ENCODE measurements at regions of chr7 and their contacts with region 1.

Region 1: GRCh38 chr7:64183126-64183742 is 23.8 kb upstream of the ZNF735 start:
- DNase-seq: peak; percentile 63
- ATAC-seq: no peak
- H3K4me3 Mint-ChIP-seq: no peak overlapping the region
- H3K27ac Mint-ChIP-seq: no peak overlapping the region
- H3K4me1 Mint-ChIP-seq: no peaks in the 10 kb centered on the region
- H3K27me3 Mint-ChIP-seq: peaks cover 12% of the 10 kb centered on the region

Region 2: GRCh38 chr7:63092951-63093350 is 1090.3 kb before region 1 on chr7:
- CTCF ChIA-PET with region 1: no interaction called
- POLR2A ChIA-PET with region 1: no interaction called
- intact Hi-C with region 1: no loop called
- DNase-seq: no peak
- ATAC-seq: no peak
- H3K4me3 Mint-ChIP-seq: no peak overlapping the region
- H3K27ac Mint-ChIP-seq: no peak overlapping the region
- H3K4me1 Mint-ChIP-seq: no peaks in the 10 kb centered on the region
- H3K27me3 Mint-ChIP-seq: no peaks in the 10 kb centered on the region

Region 3: DNA sequence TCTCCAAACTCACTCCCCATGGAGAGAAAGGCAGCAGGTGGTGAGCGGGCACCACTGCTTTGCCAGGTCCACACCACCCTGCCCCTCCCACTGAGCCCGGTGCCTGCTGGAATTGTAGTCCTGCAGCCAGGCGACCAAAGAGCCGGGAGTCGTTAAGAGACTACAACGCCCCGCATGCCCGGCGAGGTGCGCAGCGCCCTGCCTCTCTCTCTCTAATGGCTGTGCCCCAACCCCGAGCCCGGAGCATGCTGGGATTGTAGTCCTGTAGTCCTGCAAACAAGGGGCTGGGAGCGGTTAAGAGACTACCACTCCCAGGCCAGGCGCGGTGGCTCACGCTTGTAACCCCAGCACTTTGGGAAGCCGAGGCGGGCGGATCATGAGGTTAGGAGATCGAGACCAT is 146.1 kb before region 1 on chr7:
- CTCF ChIA-PET with region 1: no interaction called
- POLR2A ChIA-PET with region 1: no interaction called
- intact Hi-C with region 1: no loop called
- DNase-seq: no peak
- ATAC-seq: no peak
- H3K4me3 Mint-ChIP-seq: no peak overlapping the region
- H3K27ac Mint-ChIP-seq: no peak overlapping the region
- H3K4me1 Mint-ChIP-seq: no peaks in the 10 kb centered on the region
- H3K27me3 Mint-ChIP-seq: peaks cover 3% of the 10 kb centered on the region

Region 4: DNA sequence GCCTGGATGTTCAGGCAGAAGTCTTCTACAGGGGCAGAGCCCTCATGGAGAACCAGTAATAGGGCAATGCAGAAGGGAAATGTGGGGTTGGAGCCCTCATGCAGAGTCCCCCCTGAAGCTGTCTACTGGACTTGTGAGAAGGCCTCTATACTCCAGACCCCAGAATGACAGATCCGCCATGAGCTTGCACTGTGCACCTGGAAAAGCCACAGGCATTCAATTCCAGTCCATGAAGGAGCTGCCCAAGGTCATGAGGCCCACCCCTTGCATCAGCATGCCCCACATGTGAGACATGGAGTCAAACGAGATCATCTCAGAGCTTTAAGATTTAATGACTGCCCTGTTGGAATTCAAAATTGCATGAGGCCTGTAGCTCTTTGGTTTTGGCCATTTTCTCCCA is 40.1 kb after region 1 on chr7:
- CTCF ChIA-PET with region 1: no interaction called
- POLR2A ChIA-PET with region 1: no interaction called
- intact Hi-C with region 1: no loop called
- DNase-seq: no peak
- ATAC-seq: no peak
- H3K4me3 Mint-ChIP-seq: no peak overlapping the region
- H3K27ac Mint-ChIP-seq: no peak overlapping the region
- H3K4me1 Mint-ChIP-seq: no peaks in the 10 kb centered on the region
- H3K27me3 Mint-ChIP-seq: no peaks in the 10 kb centered on the region

Region 5: DNA sequence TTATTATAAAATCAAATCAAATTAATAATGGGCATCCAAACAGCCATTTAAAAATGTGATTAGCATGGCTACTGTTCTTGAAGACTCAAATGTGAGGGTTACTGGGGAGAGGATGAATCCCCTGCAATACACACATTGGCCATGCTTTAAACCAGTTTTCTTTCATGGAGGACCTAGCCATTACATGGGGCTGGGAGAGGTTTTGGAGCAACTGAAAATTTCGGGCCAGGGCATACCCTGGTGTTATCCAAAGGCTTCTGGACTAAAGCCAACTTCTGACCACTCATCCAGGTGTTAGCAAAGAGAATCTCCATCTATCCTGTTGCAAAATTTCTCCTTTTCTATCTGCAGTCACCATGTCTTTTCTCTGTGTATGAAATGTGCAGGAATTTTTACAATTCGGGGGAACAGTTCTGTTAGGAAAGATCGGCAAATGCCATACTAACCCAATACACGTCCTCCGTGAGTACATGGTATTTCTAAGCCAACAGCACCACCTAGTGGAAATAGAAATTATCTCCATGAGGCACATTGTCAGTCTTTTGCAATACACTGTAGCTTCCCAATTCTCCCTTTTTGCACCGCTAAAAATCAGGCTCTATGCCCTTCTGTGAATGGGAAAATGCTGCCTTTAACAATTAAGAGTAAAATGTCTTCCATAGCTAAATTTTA is 435.7 kb after region 1 on chr7:
- CTCF ChIA-PET with region 1: interaction called, 4 read pairs
- POLR2A ChIA-PET with region 1: no interaction called
- intact Hi-C with region 1: loop called (anchors 1 to 2 kb)
- DNase-seq: no peak
- ATAC-seq: no peak
- H3K4me3 Mint-ChIP-seq: no peak overlapping the region
- H3K27ac Mint-ChIP-seq: no peak overlapping the region
- H3K4me1 Mint-ChIP-seq: no peaks in the 10 kb centered on the region
- H3K27me3 Mint-ChIP-seq: no peaks in the 10 kb centered on the region

Region 6: DNA sequence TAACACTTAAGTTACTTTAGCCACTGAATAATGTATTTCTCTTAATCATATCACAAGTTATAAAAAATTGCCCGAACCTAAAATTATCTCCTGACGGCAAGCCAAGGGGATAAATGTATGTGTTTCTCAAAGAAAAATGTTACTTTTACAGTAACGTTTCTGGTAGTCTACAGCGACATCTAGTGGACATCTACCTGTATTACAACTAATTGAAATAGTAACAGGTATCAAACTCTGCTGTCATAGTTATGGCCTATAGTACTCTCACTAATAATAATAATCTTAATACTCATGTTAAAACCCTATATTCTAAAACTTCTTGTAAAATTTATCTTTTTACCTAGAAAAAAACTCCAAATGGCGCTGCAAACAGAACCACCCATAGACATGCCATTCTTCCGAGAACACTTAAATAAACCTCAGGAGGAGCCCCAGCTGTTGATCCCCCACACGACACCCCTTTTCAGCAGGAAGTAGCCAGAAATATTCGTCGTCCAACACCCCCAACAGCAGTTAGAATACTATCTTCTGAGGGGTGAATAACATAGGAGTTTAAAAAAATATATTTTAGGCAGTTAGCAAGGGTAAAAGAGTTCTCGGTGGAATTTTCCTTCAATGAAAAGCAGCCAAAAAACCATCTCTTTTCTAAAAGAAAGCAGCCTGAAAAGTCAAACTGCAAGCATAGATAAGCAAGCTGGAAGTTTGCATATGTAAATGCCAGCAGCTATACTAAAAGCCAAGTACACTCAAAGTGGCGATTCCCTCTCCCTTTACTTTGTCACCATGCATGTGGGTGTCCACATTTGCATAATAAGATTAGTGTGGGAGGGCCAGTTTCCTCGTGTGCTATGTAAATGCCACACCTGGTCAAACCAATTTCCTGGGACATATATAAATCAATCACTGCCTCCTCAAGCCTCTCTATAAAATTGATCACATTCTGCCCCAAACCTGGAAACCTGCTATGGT is 442.2 kb after region 1 on chr7:
- CTCF ChIA-PET with region 1: interaction called, 3 read pairs
- POLR2A ChIA-PET with region 1: no interaction called
- intact Hi-C with region 1: loop called in 1 of 2 experiments (anchors 1 kb)
- DNase-seq: no peak
- ATAC-seq: peak; percentile 8
- H3K4me3 Mint-ChIP-seq: no peak overlapping the region
- H3K27ac Mint-ChIP-seq: no peak overlapping the region
- H3K4me1 Mint-ChIP-seq: peaks cover 5% of the 10 kb centered on the region
- H3K27me3 Mint-ChIP-seq: no peaks in the 10 kb centered on the region